ENCODE measurements at regions of chr10 and their contacts with region 1.

Region 1: GRCh38 chr10:89369156-89370105 is 8.4 kb upstream of the IFIT1B start:
- DNase-seq: peak in 4 of 7 donors; percentile 30 to 56 (median 41)
- H3K4me3 ChIP-seq: no peak overlapping the region
- H3K27ac ChIP-seq: peak overlapping the region in 1 of 5 donors; percentile 23
- H3K4me1 ChIP-seq: peaks cover 15 to 34% of the 10 kb centered on the region in 2 donors
- H3K27me3 ChIP-seq: no peaks in the 10 kb centered on the region
- CTCF ChIP-seq: peak; percentile 24 to 70 (median 62)
- POLR2A ChIP-seq: no peak

Region 2: DNA sequence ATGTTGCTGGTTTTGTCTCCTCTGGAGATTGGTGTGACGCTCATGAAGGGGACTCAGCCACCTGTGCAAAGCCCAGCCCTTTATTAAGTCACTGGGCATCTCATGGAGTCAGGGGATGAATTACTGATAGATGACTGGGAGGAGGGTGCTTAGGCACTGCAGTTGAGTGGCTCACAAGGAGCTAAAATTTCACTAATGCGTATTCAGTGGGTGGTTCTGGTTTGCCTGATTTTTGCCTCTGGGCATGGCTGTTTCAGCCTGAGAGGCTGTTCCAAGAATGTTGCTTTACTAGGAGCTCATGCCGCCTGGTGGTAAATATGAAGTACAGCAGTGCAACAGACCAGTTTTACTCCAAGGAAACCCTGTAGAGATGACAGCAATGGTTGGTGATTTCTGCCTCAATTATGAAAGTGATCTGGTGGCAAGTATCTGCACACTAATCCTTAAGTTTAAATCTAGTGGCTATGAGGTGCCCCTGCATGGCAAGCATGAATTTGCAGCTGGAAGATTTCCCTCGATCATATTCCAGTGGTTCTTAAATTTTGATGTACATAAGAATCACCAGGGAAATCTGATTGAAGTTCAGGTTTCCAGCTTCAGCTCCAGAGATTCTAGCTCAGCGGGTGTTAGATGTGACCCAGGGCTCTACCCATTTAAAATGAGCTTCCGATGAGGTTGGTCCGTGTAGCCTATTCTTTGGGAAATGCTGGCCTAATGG is 436.7 kb before region 1 on chr10:
- intact Hi-C with region 1: no loop called
- DNase-seq: peak; percentile 57 to 92 (median 76)
- H3K4me3 ChIP-seq: no peak overlapping the region
- H3K27ac ChIP-seq: peak overlapping the region in 4 of 5 donors; percentile 1 to 67 (median 27)
- H3K4me1 ChIP-seq: peaks cover 0 to 26% of the 10 kb centered on the region in 2 donors
- H3K27me3 ChIP-seq: no peaks in the 10 kb centered on the region
- CTCF ChIP-seq: peak; percentile 88 to 98 (median 96)
- POLR2A ChIP-seq: no peak

Region 3: DNA sequence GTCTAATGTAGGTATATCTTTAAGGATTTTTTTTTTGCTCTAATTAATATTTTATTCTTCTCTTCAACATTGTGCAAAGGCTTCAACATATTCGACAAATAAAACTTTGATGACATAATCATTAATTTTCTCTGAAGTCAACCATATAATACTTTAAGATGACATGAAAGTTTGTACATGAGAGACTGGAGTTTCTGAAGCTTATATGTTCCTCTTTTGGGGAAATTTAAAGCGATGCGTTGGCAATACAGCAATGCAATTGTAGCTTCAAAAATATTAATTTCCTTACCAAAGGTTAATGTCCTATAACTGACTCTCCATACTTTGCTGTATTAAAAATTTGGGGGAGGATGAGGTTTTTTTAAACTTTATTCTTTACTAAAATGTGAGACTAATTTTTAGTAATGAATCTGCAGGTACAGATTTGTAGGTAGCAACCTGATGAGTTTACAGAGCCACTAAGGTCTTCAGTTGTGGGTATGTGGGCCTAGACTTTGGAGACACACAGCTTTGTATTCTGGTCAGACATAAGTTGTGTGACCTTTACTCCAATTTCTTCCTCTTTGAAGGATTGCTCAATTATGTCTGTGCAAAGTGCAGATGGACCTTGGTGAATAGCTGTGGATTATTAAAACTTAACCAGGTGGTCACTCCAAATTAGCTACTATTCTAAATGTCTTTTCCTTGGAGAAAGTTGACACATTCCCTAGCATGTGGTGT is 99.8 kb before region 1 on chr10:
- intact Hi-C with region 1: loop called in 1 of 2 experiments (anchors 5 kb)
- DNase-seq: no peak
- H3K4me3 ChIP-seq: no peak overlapping the region
- H3K27ac ChIP-seq: peak overlapping the region in 1 of 5 donors; percentile 26
- H3K4me1 ChIP-seq: peaks cover 9 to 14% of the 10 kb centered on the region in 2 donors
- H3K27me3 ChIP-seq: no peaks in the 10 kb centered on the region
- CTCF ChIP-seq: no peak
- POLR2A ChIP-seq: no peak

Measured in adrenal gland (tissue), 19 donors.